ENCODE measurements at regions of chr16 and their contacts with region 1.

Region 1: GRCh38 chr16:56708525-56709442 is 21.1 kb upstream of the NUP93 start:
- DNase-seq: peak; percentile 14 to 73 (median 51)
- ATAC-seq: peak; percentile 91 to 92
- H3K4me3 Mint-ChIP-seq: peak overlapping the region; percentile 88 to 97 (median 93)
- H3K27ac Mint-ChIP-seq: peak overlapping the region; percentile 92 to 99 (median 96)
- H3K4me1 Mint-ChIP-seq: peaks cover 28 to 67% (median 48%) of the 10 kb centered on the region in 4 donors
- H3K27me3 Mint-ChIP-seq: no peaks in the 10 kb centered on the region

Region 2: GRCh38 chr16:56576585-56577293 is 132.0 kb before region 1 on chr16:
- POLR2A ChIA-PET with region 1: interaction called, 13 read pairs
- DNase-seq: peak; percentile 78 to 93 (median 88)
- ATAC-seq: peak; percentile 100
- H3K4me3 Mint-ChIP-seq: no peak overlapping the region
- H3K27ac Mint-ChIP-seq: peak overlapping the region in 8 of 10 donors; percentile 38 to 89 (median 74)
- H3K4me1 Mint-ChIP-seq: peaks cover 6 to 10% (median 6%) of the 10 kb centered on the region in 4 donors
- H3K27me3 Mint-ChIP-seq: no peaks in the 10 kb centered on the region

Region 3: GRCh38 chr16:56681939-56682702 is 26.7 kb before region 1 on chr16 and contains the start of gene MT1X:
- POLR2A ChIA-PET with region 1: interaction called, 19 read pairs
- DNase-seq: peak; percentile 77 to 94 (median 86)
- ATAC-seq: peak; percentile 98 to 99
- H3K4me3 Mint-ChIP-seq: peak within 1 kb of the TSS; percentile 94 to 99 (median 96)
- H3K27ac Mint-ChIP-seq: peak within 1 kb of the TSS; percentile 94 to 99 (median 98)
- H3K4me1 Mint-ChIP-seq: peaks cover 17 to 36% (median 28%) of the 10 kb centered on the region in 4 donors
- H3K27me3 Mint-ChIP-seq: no peaks in the 10 kb centered on the region
- polyA plus RNA-seq, gene MT1X: 185 to 201 (median 201) TPM

Region 4: GRCh38 chr16:56697456-56698155 is 11.2 kb before region 1 on chr16:
- POLR2A ChIA-PET with region 1: no interaction called
- DNase-seq: no peak
- ATAC-seq: no peak
- H3K4me3 Mint-ChIP-seq: no peak overlapping the region
- H3K27ac Mint-ChIP-seq: no peak overlapping the region
- H3K4me1 Mint-ChIP-seq: peaks cover 0 to 11% (median 10%) of the 10 kb centered on the region in 4 donors
- H3K27me3 Mint-ChIP-seq: no peaks in the 10 kb centered on the region

Region 5: DNA sequence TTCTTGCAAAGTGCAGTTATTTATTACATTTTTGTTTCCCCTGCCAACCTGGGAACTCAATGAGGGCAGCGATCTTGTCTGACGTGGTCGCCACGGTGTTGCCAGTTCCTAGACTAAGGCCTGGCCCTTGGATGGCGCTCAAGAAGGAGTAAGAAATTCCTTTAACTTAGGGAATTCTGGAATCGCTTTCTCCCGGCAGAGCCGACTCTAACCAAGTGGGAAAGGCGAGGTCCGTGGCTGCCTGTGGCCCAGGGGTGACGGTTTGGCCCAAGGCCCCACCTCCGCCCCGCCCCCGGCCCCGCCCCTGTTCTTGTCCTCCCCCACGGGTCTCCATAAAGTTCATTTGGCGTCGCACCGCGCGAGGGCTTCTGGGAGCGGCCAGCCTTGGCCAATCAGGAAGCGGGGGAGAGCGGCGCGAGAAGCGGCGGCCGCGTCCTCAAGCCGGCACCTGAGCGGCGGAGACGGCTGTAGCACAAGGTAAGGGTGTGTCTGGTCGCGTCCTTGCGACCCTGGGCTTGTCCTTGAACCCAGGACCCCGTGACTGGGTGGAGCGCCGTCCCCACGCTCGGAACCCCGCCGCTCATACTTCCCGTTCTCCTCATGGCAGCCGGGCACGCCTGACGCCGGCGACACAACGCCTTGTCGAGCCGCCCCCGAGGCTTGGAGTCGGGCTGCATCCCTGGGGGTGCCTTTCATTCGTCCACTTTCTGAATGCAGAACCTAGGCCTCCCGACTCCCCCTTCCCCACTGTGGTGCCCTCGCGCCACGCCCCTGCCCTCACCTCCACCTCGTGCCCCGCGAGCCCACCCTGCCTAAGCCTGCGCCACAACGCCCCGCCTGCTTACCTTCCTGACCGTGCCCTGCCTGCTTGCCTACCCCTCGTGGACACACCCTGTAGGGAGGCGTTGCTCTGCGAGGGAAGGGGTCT is 21.2 kb after region 1 on chr16 and contains the start of gene NUP93:
- POLR2A ChIA-PET with region 1: interaction called, 29 read pairs
- DNase-seq: peak; percentile 83 to 95 (median 86)
- ATAC-seq: peak; percentile 96
- H3K4me3 Mint-ChIP-seq: peak within 1 kb of the TSS in 1 of 10 donors; percentile 95
- H3K27ac Mint-ChIP-seq: peak within 1 kb of the TSS in 8 of 10 donors; percentile 90 to 98 (median 93)
- H3K4me1 Mint-ChIP-seq: peaks cover 14 to 30% (median 22%) of the 10 kb centered on the region in 4 donors
- H3K27me3 Mint-ChIP-seq: no peaks in the 10 kb centered on the region
- polyA plus RNA-seq, gene NUP93: 66.6 to 104 (median 77.5) TPM

Region 6: GRCh38 chr16:56753410-56753809 is 44.6 kb after region 1 on chr16:
- POLR2A ChIA-PET with region 1: no interaction called
- DNase-seq: no peak
- ATAC-seq: no peak
- H3K4me3 Mint-ChIP-seq: no peak overlapping the region
- H3K27ac Mint-ChIP-seq: no peak overlapping the region
- H3K4me1 Mint-ChIP-seq: peaks cover 1 to 16% (median 10%) of the 10 kb centered on the region in 4 donors
- H3K27me3 Mint-ChIP-seq: no peaks in the 10 kb centered on the region

Region 7: GRCh38 chr16:56797861-56798260 is 89.1 kb after region 1 on chr16:
- POLR2A ChIA-PET with region 1: no interaction called
- DNase-seq: no peak
- ATAC-seq: no peak
- H3K4me3 Mint-ChIP-seq: no peak overlapping the region
- H3K27ac Mint-ChIP-seq: peak overlapping the region in 1 of 10 donors; percentile 46
- H3K4me1 Mint-ChIP-seq: peaks cover 0 to 4% (median under 1%) of the 10 kb centered on the region in 4 donors
- H3K27me3 Mint-ChIP-seq: no peaks in the 10 kb centered on the region